H1 (cell line): ENCODE measurements at regions of chr22 and their contacts with region 1.

Region 1: DNA sequence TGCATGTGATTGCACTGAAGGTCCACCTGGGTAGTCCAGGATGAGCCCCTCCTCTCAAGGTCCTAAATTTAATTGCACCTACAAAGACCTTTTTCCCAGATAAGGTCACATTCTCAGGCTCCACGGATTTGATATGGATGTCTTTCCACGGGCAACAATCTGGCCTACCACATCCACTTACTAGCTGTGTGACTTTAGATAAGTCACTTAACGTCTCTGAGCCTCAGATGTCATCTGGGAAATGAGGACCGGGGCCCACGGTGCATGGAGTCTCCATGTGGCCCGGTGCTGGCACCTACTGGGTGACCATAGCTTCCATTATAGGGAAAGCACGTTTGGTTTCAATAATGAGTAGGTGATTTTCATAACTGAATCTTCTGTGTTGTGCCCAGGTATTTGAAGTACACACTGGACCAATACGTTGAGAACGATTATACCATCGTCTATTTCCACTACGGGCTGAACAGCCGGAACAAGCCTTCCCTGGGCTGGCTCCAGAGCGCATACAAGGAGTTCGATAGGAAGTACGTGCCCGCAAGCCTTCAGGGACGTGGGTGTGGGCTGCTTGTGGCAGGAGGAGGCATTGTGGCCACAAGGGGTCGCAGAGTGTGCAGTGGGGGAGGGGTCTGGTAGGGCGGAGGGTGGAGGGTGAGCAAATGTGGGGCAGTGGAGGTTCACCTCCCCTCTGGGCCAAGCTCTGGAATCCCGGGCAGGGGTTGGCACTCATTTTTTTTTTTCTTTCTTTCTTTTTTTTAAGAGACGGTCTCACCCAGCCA is 55.7 kb downstream of the ARHGAP8 start:
- DNase-seq: peak in 1 of 2 experiments; percentile 80
- H3K4me3 ChIP-seq: no peak overlapping the region
- H3K27ac ChIP-seq: no peak overlapping the region
- H3K4me1 ChIP-seq: peaks cover 7 to 10% (median 9%) of the 10 kb centered on the region in 4 experiments
- H3K27me3 ChIP-seq: no peaks in the 10 kb centered on the region
- CTCF ChIP-seq: peak; percentile 54 to 86 (median 78)
- EP300 ChIP-seq: no peak
- POLR2A ChIP-seq: no peak
- RAD21 ChIP-seq: peak; percentile 9 to 47; a peak in 3 of 4 replicates

Region 2: GRCh38 chr22:44796972-44797725 is 11.0 kb before region 1 on chr22:
- CTCF ChIA-PET with region 1: interaction called, 22 read pairs
- POLR2A ChIA-PET with region 1: interaction called, 6 read pairs
- DNase-seq: no peak
- H3K4me3 ChIP-seq: no peak overlapping the region
- H3K27ac ChIP-seq: no peak overlapping the region
- H3K4me1 ChIP-seq: peaks cover 6 to 30% (median 15%) of the 10 kb centered on the region in 4 experiments
- H3K27me3 ChIP-seq: no peaks in the 10 kb centered on the region
- CTCF ChIP-seq: no peak
- EP300 ChIP-seq: no peak
- POLR2A ChIP-seq: no peak
- RAD21 ChIP-seq: no peak

Region 3: GRCh38 chr22:44819971-44820631 is 12.0 kb after region 1 on chr22:
- CTCF ChIA-PET with region 1: interaction called, 13 read pairs
- POLR2A ChIA-PET with region 1: interaction called, 5 read pairs
- DNase-seq: peak in 1 of 2 experiments; percentile 67
- H3K4me3 ChIP-seq: no peak overlapping the region
- H3K27ac ChIP-seq: no peak overlapping the region
- H3K4me1 ChIP-seq: peaks cover 0 to 13% (median 5%) of the 10 kb centered on the region in 4 experiments; a peak in 6 of 7 replicates
- H3K27me3 ChIP-seq: no peaks in the 10 kb centered on the region
- CTCF ChIP-seq: no peak
- EP300 ChIP-seq: no peak
- POLR2A ChIP-seq: no peak
- RAD21 ChIP-seq: no peak

Region 4: DNA sequence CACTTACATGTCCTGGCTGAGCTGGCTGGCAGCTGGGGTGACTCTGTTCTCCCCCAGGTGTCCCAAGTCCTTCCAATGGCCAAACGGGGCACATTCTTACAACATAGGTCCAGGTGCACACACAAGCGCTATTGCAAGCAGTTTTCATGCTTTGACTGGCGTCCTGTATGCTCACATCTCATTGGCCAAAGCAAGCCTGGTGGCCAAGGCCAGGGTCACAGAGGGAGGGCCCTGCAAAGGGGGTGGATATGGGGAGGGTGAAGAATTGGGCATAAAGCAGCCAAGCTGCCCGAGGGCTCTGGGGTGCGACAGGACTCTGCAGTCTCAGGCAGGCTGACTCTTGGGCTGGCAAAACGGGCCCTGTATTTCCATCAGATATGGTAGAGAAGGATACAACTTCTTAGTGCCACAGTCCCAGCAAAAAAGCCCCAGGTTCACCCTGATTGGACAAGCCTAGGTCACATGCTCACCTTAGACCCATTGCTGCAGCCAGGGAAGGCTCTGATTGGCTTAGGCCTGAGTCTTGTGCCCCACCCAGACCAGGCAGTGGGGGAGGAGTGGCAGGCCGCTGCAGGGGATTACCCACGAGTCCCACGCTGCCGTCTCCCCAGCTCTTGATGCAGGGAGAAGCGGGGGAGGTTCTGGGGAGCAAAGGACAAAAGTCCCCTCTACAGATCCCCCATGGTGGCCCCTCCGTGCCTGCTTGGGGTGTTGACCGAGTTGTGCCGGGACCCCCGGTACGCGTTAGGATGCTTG is 55.1 kb after region 1 on chr22:
- CTCF ChIA-PET with region 1: no interaction called
- POLR2A ChIA-PET with region 1: no interaction called
- DNase-seq: peak in 1 of 2 experiments; percentile 66
- H3K4me3 ChIP-seq: no peak overlapping the region
- H3K27ac ChIP-seq: no peak overlapping the region
- H3K4me1 ChIP-seq: peaks cover 0 to 5% (median 0%) of the 10 kb centered on the region in 4 experiments; a peak in 3 of 7 replicates
- H3K27me3 ChIP-seq: no peaks in the 10 kb centered on the region
- CTCF ChIP-seq: no peak
- EP300 ChIP-seq: no peak
- POLR2A ChIP-seq: peak in 1 of 2 experiments; percentile 45; a peak in 1 of 3 replicates
- RAD21 ChIP-seq: no peak

Region 5: GRCh38 chr22:44947049-44947448 is 138.9 kb after region 1 on chr22:
- CTCF ChIA-PET with region 1: no interaction called
- POLR2A ChIA-PET with region 1: no interaction called
- DNase-seq: no peak
- H3K4me3 ChIP-seq: no peak overlapping the region
- H3K27ac ChIP-seq: no peak overlapping the region
- H3K4me1 ChIP-seq: peaks cover 0 to 22% (median 13%) of the 10 kb centered on the region in 4 experiments; a peak in 5 of 7 replicates
- H3K27me3 ChIP-seq: no peaks in the 10 kb centered on the region
- CTCF ChIP-seq: no peak
- EP300 ChIP-seq: no peak
- POLR2A ChIP-seq: no peak
- RAD21 ChIP-seq: no peak